GM10248 (cell line): ENCODE measurements at regions of chr16 and their contacts with region 1.

Region 1: GRCh38 chr16:56729735-56730662 is at the start of gene NUP93:
- DNase-seq: peak; percentile 95
- CTCF ChIP-seq: no peak

Region 2: DNA sequence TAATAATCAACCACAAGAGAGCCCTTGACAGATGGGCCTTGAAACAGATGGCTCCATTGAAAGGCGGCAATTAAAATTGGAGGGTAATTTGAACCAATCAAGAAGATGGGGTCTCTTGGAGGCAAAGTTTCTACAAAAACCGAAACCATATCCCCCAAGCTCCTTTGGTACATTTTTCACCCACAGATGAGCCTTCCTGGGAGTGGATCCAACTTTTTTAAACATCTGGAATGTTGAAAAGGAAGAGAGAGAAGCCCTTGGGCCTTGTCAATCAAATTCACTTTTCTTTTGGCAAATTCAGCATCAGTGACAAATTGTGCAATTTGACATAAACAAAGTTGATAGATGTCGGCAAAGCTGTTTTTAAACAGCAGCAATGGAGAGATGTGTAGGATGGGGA is 13.2 kb before region 1 on chr16:
- CTCF ChIA-PET with region 1: interaction called, 15 read pairs
- POLR2A ChIA-PET with region 1: no interaction called
- DNase-seq: no peak
- CTCF ChIP-seq: no peak

Region 3: GRCh38 chr16:56742030-56742984 is 12.3 kb after region 1 on chr16:
- CTCF ChIA-PET with region 1: interaction called, 10 read pairs
- POLR2A ChIA-PET with region 1: no interaction called
- DNase-seq: no peak
- CTCF ChIP-seq: no peak

Region 4: DNA sequence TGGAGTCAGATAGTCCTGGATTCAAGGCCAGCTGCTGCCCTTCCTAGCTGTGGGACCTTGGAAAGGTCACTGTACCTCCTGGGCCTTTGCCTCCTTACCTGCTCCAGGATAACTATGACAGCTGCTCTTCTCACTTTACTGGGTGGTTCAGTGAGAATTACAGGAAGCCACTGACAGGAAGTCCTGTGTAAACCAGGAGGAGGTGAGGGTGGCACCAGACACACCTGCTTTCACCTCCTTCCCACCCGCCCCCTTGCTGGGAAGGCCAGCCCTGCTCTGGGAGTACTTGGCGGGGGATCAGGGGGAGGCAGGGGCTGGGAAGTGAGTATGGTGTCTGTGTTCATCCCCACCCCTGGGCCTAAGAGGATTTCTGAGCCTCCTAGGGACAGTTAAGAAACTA is 405.0 kb after region 1 on chr16:
- CTCF ChIA-PET with region 1: no interaction called
- POLR2A ChIA-PET with region 1: no interaction called
- DNase-seq: no peak
- CTCF ChIP-seq: no peak